CD8-positive, alpha-beta T cell (primary cell): ENCODE measurements at regions of chr15 and their contacts with region 1.

Region 1: DNA sequence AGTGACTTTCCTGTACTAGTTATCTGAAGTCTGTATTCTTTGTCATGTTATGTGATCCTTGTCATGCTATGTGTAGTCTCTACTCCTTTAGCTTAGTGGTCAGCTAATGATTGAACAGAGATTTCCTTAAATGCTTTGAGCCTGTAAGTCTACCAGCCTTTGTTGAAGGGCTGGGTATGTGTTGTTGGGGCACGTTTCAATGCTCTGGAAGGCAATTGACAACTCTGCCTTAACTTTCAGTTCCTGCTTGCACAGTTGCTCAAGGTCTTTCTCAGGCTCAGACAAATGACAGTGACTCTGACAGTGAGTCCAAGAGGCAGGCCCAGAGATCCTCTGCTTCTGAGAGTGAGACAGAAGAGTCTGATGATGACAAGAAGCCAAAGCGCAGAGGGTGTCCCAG is 89.3 kb downstream of the CHD2 start:
- DNase-seq: no peak
- ATAC-seq: no peak
- H3K4me3 ChIP-seq: no peak overlapping the region
- H3K4me3 Mint-ChIP-seq: no peak overlapping the region
- H3K27ac ChIP-seq: no peak overlapping the region
- H3K27ac Mint-ChIP-seq: peak overlapping the region; percentile 20
- H3K4me1 ChIP-seq: no peaks in the 10 kb centered on the region
- H3K4me1 Mint-ChIP-seq: peaks cover 28% of the 10 kb centered on the region
- H3K27me3 ChIP-seq: no peaks in the 10 kb centered on the region
- H3K27me3 Mint-ChIP-seq: no peaks in the 10 kb centered on the region
- CTCF ChIP-seq: no peak

Region 2: DNA sequence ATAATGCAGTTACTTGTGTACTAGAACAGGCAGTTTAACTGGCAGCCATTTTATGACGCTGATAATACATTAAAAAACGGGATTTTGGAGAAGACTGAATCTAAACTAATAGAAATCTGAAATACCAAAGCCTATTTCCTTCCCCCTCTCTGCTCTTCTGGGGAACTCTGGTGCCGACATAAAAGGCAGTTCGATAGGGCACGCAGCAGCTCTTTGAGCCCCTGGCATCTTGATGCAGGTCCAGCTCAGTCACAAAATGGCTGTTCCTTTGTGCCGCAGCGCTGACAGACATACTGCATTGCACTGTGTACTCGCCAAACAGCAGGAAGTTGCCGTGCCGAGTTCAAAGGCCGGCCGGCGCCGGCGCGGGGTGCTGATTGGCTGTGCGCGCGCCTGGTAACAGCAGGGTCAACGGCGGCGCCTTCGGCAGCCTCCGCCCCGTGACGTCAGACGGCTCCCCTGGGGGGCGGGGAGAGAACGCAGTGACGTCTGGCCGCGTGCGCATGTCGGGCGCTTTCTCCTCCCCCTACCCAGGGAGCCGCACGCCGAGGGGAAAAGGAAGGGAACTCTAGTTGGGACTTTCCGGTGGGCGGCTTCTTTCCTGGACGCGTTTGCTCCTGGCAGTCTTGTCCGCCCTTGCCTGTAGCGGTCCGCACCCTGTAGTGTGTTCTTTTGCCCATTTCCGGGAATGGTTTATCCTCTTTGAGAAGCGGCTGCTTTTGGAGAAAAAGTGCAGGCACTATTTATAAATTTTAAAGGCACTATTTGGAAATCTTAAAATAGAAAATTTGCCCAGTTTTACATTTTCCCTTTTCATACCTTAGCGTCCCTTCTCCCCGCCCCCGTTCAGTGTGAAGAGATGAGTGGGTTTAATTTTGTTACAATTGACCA is 85.3 kb before region 1 on chr15:
- CTCF ChIA-PET with region 1: no interaction called
- POLR2A ChIA-PET with region 1: no interaction called
- intact Hi-C with region 1: no loop called
- DNase-seq: peak; percentile 98 to 99 (median 99)
- ATAC-seq: peak; percentile 77
- H3K4me3 ChIP-seq: peak overlapping the region; percentile 75 to 88
- H3K4me3 Mint-ChIP-seq: peak overlapping the region; percentile 94
- H3K27ac ChIP-seq: peak overlapping the region; percentile 95 to 99
- H3K27ac Mint-ChIP-seq: peak overlapping the region; percentile 99
- H3K4me1 ChIP-seq: peaks cover 60% of the 10 kb centered on the region
- H3K4me1 Mint-ChIP-seq: peaks cover 58% of the 10 kb centered on the region
- H3K27me3 ChIP-seq: no peaks in the 10 kb centered on the region
- H3K27me3 Mint-ChIP-seq: no peaks in the 10 kb centered on the region
- CTCF ChIP-seq: no peak

Region 3: DNA sequence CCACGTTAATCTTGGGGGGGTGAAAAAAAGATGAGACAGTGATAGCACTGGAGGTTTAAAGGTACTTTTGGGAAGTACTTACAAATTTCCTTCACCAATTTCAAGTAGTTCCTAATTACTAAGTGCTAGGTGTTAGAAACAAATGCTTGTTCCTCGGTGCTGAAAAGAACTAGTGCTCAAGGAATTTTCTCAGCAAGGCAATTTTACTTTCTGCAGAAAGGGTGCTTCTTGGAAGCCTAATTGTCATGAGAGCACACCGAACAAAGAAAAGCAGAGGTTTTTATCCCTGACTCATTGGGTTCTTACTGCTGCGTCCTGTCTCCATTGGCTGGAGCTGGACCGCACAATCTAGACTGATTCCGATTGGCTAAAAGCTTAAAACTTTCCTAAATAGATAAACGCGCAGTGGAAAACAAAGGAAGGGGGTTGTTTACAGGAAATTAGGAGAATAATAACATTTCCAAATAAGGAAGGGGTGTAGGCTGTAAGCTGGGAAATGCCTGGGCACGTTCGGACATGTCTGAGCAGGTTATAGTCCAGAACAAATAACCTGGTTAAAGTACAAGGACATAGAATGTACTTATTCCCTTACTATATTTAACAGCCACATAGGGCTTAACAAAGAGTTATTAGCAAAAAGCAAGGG is 39.7 kb before region 1 on chr15:
- CTCF ChIA-PET with region 1: interaction called, 4 read pairs
- POLR2A ChIA-PET with region 1: interaction called, 3 read pairs
- intact Hi-C with region 1: loop called in 1 of 2 experiments (anchors 10 kb)
- DNase-seq: no peak
- ATAC-seq: no peak
- H3K4me3 ChIP-seq: no peak overlapping the region
- H3K4me3 Mint-ChIP-seq: no peak overlapping the region
- H3K27ac ChIP-seq: no peak overlapping the region
- H3K27ac Mint-ChIP-seq: no peak overlapping the region
- H3K4me1 ChIP-seq: no peaks in the 10 kb centered on the region
- H3K4me1 Mint-ChIP-seq: peaks cover 7% of the 10 kb centered on the region
- H3K27me3 ChIP-seq: no peaks in the 10 kb centered on the region
- H3K27me3 Mint-ChIP-seq: no peaks in the 10 kb centered on the region
- CTCF ChIP-seq: no peak

Region 4: GRCh38 chr15:92970656-92971055 is 18.8 kb before region 1 on chr15:
- CTCF ChIA-PET with region 1: interaction called, 3 read pairs
- POLR2A ChIA-PET with region 1: no interaction called
- intact Hi-C with region 1: loop called in 1 of 2 experiments (anchors 2 kb)
- DNase-seq: no peak
- ATAC-seq: no peak
- H3K4me3 ChIP-seq: no peak overlapping the region
- H3K4me3 Mint-ChIP-seq: no peak overlapping the region
- H3K27ac ChIP-seq: no peak overlapping the region
- H3K27ac Mint-ChIP-seq: peak overlapping the region; percentile 10
- H3K4me1 ChIP-seq: peaks cover 4% of the 10 kb centered on the region
- H3K4me1 Mint-ChIP-seq: peaks cover 46% of the 10 kb centered on the region
- H3K27me3 ChIP-seq: no peaks in the 10 kb centered on the region
- H3K27me3 Mint-ChIP-seq: no peaks in the 10 kb centered on the region
- CTCF ChIP-seq: no peak

Region 5: GRCh38 chr15:93001881-93002280 is 12.4 kb after region 1 on chr15:
- CTCF ChIA-PET with region 1: no interaction called
- POLR2A ChIA-PET with region 1: interaction called, 3 read pairs
- intact Hi-C with region 1: loop called in 1 of 2 experiments (anchors 1 kb)
- DNase-seq: no peak
- ATAC-seq: no peak
- H3K4me3 ChIP-seq: no peak overlapping the region
- H3K4me3 Mint-ChIP-seq: no peak overlapping the region
- H3K27ac ChIP-seq: no peak overlapping the region
- H3K27ac Mint-ChIP-seq: no peak overlapping the region
- H3K4me1 ChIP-seq: no peaks in the 10 kb centered on the region
- H3K4me1 Mint-ChIP-seq: peaks cover 22% of the 10 kb centered on the region
- H3K27me3 ChIP-seq: no peaks in the 10 kb centered on the region
- H3K27me3 Mint-ChIP-seq: no peaks in the 10 kb centered on the region
- CTCF ChIP-seq: no peak

Region 6: DNA sequence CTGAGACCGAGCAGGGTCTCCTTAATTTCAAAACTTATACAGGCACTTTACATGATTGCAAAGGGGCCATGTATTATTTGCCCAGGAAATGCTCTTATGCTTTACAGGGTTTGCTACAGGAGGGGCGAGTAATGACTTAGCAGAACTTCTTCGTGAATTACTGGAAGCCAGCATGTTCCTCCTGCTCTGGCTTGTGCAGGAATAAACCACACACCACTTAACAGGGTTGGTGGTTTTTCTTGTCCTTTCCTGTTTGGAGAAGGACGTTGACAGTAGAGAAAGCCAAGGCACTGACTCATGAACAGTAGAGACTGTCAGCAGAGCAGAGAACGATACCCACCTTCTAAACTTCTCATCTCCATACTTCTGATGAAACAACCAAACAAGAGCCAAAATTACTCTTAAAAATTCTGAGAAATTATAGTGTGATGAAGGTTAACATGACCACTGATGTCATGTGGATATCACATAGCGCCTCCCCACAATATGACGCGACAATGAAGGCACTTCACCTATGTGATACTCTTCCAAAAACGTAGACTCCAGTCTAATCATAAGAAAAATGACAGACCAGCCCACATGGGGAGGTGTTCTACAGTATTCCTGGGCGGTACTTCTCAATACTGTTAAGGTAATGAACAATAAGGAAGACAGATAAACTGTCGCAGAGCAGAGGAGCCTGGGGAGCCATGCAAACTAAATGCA is 1217.1 kb after region 1 on chr15:
- CTCF ChIA-PET with region 1: no interaction called
- POLR2A ChIA-PET with region 1: no interaction called
- intact Hi-C with region 1: no loop called
- DNase-seq: peak in 2 of 9 experiments; percentile 6 to 9
- ATAC-seq: peak; percentile 31
- H3K4me3 ChIP-seq: peak overlapping the region in 1 of 2 experiments; percentile 2
- H3K4me3 Mint-ChIP-seq: peak overlapping the region; percentile 40
- H3K27ac ChIP-seq: no peak overlapping the region
- H3K27ac Mint-ChIP-seq: no peak overlapping the region
- H3K4me1 ChIP-seq: peaks cover 5% of the 10 kb centered on the region
- H3K4me1 Mint-ChIP-seq: peaks cover 12% of the 10 kb centered on the region
- H3K27me3 ChIP-seq: no peaks in the 10 kb centered on the region
- H3K27me3 Mint-ChIP-seq: peaks cover 11% of the 10 kb centered on the region
- CTCF ChIP-seq: no peak